ENCODE measurements at regions of chr11 and their contacts with region 1.

Region 1: DNA sequence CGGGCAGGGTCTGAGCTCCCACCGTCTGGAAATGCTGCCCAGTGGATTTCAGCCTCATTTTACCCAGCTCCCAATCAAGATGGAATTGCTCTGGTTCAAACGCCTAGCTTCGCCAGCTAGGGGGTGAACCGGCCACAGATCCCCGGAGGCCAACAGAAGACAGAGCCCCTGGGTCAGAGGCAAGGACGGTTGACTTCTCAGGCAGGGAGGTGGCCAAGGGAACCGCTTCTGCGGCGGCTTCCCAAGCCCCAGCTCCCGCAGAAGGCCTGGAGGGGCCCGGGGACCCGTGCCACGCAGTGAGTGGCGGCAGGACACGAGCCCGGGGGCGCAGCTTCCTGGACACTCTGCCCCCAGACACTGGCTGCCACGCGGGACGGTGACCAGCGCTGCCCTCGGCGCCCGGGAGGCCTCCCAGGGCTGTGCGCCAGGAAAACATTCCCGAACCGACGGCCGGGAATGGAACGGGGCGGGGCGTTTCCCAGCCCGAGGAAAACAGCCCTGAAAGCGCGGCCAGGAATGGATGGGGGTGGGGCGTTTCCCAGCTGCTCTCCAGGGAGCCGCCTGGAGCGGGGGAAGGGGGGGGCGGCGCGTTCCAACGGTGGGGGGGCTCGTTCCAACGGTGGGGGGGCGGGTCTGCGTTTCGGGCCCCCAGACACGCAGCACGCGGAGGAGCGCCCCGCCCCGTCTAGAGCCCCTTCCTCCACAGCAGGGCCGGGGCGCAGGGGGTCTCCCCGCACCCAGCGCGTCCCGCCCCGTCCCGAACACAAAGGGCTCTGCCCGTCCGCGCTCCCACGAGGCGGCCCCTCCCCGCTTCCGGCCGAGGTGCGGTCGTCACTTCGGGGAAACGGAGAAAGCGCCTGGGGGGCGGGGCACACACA is 13.5 kb upstream of the B4GALNT4 start:
- DNase-seq: peak; percentile 94
- ATAC-seq: peak; percentile 74
- H3K4me3 Mint-ChIP-seq: peak overlapping the region; percentile 89
- H3K27ac Mint-ChIP-seq: peak overlapping the region; percentile 92
- H3K4me1 Mint-ChIP-seq: peaks cover 39% of the 10 kb centered on the region
- H3K27me3 Mint-ChIP-seq: peaks cover 5% of the 10 kb centered on the region

Region 2: GRCh38 chr11:269146-269890 is 86.5 kb before region 1 on chr11:
- POLR2A ChIA-PET with region 1: interaction called, 22 read pairs
- DNase-seq: peak; percentile 56
- ATAC-seq: peak; percentile 34
- H3K4me3 Mint-ChIP-seq: peak overlapping the region; percentile 91
- H3K27ac Mint-ChIP-seq: peak overlapping the region; percentile 96
- H3K4me1 Mint-ChIP-seq: peaks cover 25% of the 10 kb centered on the region
- H3K27me3 Mint-ChIP-seq: peaks cover 2% of the 10 kb centered on the region

Region 3: GRCh38 chr11:288328-289144 is 67.3 kb before region 1 on chr11 and contains the start of gene PGGHG:
- POLR2A ChIA-PET with region 1: interaction called, 27 read pairs
- DNase-seq: peak; percentile 88
- ATAC-seq: peak; percentile 38
- H3K4me3 Mint-ChIP-seq: peak within 1 kb of the TSS; percentile 93
- H3K27ac Mint-ChIP-seq: peak within 1 kb of the TSS; percentile 98
- H3K4me1 Mint-ChIP-seq: peaks cover 34% of the 10 kb centered on the region
- H3K27me3 Mint-ChIP-seq: no peaks in the 10 kb centered on the region
- total RNA-seq, gene PGGHG: 641 to 664 TPM

Region 4: DNA sequence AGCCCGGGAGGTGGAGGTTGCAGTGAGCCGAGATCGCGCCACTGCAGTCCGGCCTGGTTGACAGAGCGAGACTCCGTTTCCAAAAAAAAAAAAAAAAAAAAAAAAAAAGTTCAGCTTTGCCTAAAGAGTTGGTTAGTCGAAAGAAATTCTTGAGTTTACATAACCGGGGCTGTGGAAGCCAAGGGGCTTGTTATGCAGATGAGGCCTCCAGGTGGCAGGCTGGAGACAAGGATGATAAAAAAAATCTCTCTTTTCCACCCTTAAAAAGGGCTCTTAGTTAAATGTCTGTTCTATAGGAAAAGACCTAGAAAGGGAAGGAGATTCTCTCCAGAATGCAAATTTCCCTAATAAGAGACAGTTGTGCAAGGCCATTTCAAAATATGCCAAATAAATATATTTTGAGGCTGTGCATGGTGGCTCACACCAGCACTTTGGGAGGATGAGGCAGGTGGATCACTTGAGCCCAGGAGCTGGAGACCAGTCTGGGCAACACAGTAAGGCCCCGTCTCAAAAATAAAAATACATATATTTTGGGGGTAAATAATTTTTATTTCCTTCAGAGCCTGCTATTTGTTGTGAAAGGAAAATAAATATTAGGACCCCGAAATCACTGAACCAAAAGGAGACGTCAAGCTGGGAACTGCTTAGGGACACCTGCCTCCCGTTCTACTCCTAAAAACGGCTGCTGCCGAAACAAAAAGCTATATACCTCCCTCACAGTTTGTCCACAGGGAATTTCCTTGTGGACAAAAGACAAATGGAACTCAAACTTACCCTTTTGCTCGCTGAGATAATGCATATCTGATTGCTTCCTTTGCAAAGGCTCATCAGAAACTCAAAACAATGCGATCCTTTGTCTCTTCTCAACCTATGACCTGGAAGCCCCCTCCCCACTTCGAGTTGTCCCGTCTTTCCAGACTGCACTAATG is 50.6 kb before region 1 on chr11:
- POLR2A ChIA-PET with region 1: interaction called, 35 read pairs
- DNase-seq: peak; percentile 63
- ATAC-seq: no peak
- H3K4me3 Mint-ChIP-seq: no peak overlapping the region
- H3K27ac Mint-ChIP-seq: peak overlapping the region; percentile 28
- H3K4me1 Mint-ChIP-seq: peaks cover 44% of the 10 kb centered on the region
- H3K27me3 Mint-ChIP-seq: peaks cover 7% of the 10 kb centered on the region

Region 5: DNA sequence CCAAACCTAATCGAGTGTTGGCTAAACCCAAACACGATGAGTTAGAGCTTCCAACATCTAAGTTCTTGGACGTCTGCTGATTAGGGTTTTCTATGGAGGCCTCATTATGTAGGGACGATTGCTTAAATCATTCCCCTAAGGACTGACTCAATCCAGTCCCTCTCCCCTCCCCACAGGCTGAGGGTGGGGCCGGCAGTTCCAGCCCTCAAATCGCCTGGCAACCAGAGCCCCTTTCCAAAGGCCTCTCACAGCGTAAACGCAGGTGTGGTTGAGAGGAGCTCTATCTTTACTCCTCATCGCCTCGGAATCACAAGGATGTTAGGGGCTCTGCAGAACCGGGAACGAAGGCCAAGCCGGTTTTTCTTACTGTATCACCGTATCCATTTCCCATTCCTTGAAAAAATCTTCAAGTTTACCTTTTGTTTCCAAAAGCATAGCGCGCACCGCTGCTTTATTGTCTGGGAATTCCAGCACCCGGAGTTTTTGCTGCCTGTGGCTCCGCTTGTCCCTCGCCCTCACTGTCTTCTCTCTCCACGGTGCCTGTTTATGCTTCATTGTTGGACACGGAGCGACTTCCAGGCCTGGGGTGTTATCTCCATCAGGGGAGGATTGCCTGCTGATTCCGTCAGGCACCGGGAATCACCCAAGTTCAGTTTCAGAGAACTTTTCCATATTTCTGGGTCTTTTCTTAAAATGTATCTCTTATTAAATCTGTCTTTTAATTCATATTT is 21.4 kb before region 1 on chr11:
- POLR2A ChIA-PET with region 1: interaction called, 50 read pairs
- DNase-seq: no peak
- ATAC-seq: no peak
- H3K4me3 Mint-ChIP-seq: no peak overlapping the region
- H3K27ac Mint-ChIP-seq: no peak overlapping the region
- H3K4me1 Mint-ChIP-seq: peaks cover 54% of the 10 kb centered on the region
- H3K27me3 Mint-ChIP-seq: no peaks in the 10 kb centered on the region

Region 6: DNA sequence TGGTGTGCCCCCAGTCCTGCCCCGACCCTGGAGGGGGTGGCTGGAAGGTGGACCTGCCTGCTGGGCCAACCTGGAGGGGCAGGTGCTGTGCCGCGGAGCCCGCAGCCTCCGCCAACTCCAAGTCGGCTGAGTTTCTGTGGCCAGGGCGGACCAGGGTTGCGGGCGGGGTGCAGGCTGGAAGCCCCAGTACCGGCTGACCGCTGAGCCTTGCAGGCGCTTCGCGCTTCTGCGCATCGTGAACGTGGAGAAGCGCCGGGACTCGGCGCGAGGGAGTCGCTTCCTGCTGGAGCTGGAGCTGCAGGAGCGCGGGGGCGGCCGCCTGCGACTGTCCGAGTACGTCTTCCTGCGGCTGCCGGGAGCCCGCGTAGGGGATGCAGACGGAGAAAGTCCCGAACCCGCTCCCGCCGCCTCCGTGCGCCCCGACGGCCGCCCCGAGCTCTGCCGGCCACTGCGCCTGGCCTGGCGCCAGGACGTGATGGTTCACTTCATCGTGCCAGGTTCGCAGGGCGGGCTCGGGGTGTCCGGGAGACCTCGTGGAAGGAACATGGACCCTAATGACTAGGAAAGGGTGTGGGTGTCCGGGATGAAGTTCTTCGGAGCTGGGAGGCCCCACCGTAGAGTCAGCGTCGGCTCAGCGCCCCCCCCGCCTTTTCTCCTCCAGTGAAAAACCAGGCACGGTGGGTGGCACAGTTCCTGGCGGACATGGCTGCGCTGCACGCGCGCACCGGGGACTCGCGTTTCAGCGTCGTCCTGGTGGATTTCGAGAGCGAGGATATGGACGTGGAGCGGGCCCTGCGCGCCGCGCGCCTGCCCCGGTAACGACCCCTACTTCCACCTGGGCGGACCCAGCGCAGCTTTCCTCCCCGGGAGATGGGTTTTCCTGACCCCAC is 23.6 kb after region 1 on chr11:
- POLR2A ChIA-PET with region 1: no interaction called
- DNase-seq: no peak
- ATAC-seq: no peak
- H3K4me3 Mint-ChIP-seq: no peak overlapping the region
- H3K27ac Mint-ChIP-seq: no peak overlapping the region
- H3K4me1 Mint-ChIP-seq: peaks cover 4% of the 10 kb centered on the region
- H3K27me3 Mint-ChIP-seq: peaks cover 5% of the 10 kb centered on the region

Region 7: GRCh38 chr11:469684-470560 is 114.1 kb after region 1 on chr11:
- POLR2A ChIA-PET with region 1: no interaction called
- DNase-seq: no peak
- ATAC-seq: no peak
- H3K4me3 Mint-ChIP-seq: no peak overlapping the region
- H3K27ac Mint-ChIP-seq: no peak overlapping the region
- H3K4me1 Mint-ChIP-seq: peaks cover 1% of the 10 kb centered on the region
- H3K27me3 Mint-ChIP-seq: no peaks in the 10 kb centered on the region

Measured in activated naive CD8-positive, alpha-beta T cell treated with anti-CD3 and anti-CD28 coated beads, Interleukin-2, amount 10 ng/mL, durations not matched to agents 7 days and 5 days (primary cell).